ENCODE measurements at regions of chr18 and their contacts with region 1.

Region 1: DNA sequence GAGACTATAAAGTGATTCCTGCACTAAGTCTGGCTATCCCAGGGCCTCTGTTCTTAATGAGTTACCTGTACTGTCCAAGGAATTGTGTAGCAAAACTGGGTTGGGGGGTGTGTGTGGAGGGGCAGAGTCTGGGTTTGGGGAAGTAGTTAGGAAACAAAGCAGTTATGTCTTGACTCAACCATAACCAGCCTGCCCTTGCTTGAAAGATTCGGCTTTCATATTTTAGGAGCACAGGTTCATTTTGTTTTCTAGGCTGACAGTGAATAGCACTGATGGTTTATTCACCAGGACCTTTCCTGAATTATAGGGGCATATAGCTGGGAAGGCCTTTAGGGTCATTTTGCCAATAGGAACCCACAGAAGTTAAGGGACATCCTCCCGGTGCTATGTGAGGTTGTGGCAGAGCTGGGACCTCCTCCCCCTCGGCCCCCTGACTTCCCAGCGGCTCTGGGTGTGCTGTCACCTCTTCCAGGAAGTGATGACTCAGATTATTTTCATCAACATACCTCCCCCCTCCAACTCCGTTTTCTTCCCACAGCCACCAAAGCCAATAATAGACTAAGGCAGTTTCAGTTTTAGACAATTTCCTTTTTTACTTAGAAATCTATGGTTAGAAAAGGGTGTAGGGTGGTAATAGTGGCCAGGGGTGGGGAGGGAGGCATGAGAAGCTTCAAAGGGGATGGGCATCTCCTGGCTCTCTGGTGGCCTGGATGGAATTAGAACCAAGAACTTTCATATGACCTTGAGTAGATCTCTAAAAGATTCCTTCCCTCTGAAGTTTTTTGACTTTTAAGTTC is 44.8 kb downstream of the SETBP1 start:
- DNase-seq: peak; percentile 78
- H3K4me3 Mint-ChIP-seq: no peak overlapping the region
- H3K27ac Mint-ChIP-seq: peak overlapping the region; percentile 59
- H3K4me1 Mint-ChIP-seq: peaks cover 54% of the 10 kb centered on the region
- H3K27me3 Mint-ChIP-seq: no peaks in the 10 kb centered on the region

Region 2: DNA sequence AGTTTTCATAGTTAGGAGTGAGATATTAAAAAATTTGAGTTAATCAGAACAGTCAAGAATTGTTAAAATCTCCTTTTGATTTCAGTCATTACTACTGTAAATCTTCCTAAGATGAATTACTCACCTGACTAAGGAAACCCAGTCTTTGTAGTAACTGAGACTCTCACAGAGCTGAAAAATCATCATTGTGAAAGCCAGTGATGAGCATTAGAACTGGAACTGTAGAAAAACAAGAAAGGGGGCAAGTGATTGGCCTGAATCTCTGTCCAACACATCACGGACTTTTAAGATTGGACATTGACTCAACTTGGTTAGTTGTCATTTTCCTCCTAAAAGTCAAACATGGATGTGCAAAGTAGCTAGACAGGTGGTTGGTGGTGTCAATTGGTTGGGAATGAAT is 22.9 kb before region 1 on chr18:
- CTCF ChIA-PET with region 1: no interaction called
- intact Hi-C with region 1: loop called (anchors 2 kb)
- DNase-seq: no peak
- H3K4me3 Mint-ChIP-seq: no peak overlapping the region
- H3K27ac Mint-ChIP-seq: no peak overlapping the region
- H3K4me1 Mint-ChIP-seq: peaks cover 16% of the 10 kb centered on the region
- H3K27me3 Mint-ChIP-seq: peaks cover 27% of the 10 kb centered on the region

Region 3: DNA sequence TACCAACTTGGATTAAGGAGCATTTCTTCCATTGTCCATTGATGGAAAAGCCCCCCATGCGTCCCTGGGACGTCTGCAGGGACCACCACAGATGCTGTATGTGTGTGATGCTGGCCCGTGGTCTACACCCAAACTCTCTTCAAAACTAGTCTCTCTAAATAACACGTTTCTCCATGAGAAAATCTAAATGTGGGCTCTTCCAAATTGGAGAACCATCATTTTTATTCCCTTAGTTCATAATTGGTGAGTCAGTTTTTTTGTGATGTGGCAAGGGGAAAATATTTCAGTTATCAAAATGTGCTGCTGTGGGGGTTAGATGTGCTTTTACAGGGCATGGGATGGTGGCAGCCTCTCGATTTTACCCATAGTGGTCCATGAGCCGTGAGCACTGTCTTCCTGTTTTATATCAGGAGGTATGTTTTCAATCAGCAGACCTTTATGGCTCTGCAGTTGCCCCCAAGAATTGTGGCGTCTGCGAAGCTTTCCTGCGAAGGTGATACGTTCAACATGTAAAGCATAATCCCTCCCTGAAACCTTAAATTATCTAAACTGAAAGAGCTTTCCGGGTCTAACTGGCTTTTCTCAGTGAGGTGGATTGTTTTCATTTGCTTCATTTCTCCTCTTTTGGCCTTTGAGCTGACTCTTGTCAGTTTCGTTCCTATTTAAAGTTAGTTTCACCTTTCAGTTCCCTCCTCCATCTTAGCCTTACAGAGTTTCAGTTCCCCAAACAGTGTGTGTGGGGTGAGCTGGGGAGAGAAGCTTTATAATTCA is 33.5 kb after region 1 on chr18:
- CTCF ChIA-PET with region 1: interaction called, 7 read pairs
- intact Hi-C with region 1: loop called (anchors 1 kb)
- DNase-seq: peak; percentile 76
- H3K4me3 Mint-ChIP-seq: no peak overlapping the region
- H3K27ac Mint-ChIP-seq: peak overlapping the region; percentile 80
- H3K4me1 Mint-ChIP-seq: peaks cover 27% of the 10 kb centered on the region
- H3K27me3 Mint-ChIP-seq: peaks cover 6% of the 10 kb centered on the region

Region 4: DNA sequence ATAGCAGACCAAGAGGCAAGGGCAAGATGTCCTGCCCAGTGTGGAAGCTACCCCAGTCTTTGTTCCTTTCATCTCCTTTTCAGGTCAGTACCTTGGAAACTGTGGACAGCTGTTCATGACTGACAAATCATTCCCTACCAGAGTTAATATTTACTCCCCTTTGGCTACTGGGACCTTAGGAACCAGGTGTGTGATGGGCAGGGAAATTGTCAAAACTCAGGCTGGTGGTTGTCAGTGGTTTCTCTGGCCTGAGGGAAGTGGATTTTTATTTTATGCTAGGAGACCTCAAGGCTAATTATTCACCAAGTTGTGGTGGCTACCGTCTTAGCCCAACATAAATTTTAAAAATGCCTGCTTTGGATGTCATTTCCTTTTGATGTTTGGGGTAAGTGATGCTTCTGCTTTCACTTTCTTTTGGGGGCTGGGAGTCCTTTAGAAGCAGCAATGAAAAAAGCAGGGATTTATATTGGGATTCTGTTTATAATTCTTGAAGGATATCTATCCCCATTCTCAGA is 74.5 kb after region 1 on chr18:
- CTCF ChIA-PET with region 1: no interaction called
- intact Hi-C with region 1: loop called (anchors 1 kb)
- DNase-seq: no peak
- H3K4me3 Mint-ChIP-seq: no peak overlapping the region
- H3K27ac Mint-ChIP-seq: no peak overlapping the region
- H3K4me1 Mint-ChIP-seq: peaks cover 49% of the 10 kb centered on the region
- H3K27me3 Mint-ChIP-seq: peaks cover 9% of the 10 kb centered on the region

Region 5: GRCh38 chr18:44838971-44839666 is 113.6 kb after region 1 on chr18:
- CTCF ChIA-PET with region 1: no interaction called
- intact Hi-C with region 1: loop called (anchors 2 kb)
- DNase-seq: peak; percentile 85
- H3K4me3 Mint-ChIP-seq: no peak overlapping the region
- H3K27ac Mint-ChIP-seq: no peak overlapping the region
- H3K4me1 Mint-ChIP-seq: peaks cover 12% of the 10 kb centered on the region
- H3K27me3 Mint-ChIP-seq: peaks cover 22% of the 10 kb centered on the region

Region 6: GRCh38 chr18:45197526-45197970 is 472.1 kb after region 1 on chr18:
- CTCF ChIA-PET with region 1: no interaction called
- intact Hi-C with region 1: loop called (anchors 1 kb)
- DNase-seq: peak; percentile 18
- H3K4me3 Mint-ChIP-seq: no peak overlapping the region
- H3K27ac Mint-ChIP-seq: no peak overlapping the region
- H3K4me1 Mint-ChIP-seq: no peaks in the 10 kb centered on the region
- H3K27me3 Mint-ChIP-seq: peaks cover 6% of the 10 kb centered on the region

Region 7: DNA sequence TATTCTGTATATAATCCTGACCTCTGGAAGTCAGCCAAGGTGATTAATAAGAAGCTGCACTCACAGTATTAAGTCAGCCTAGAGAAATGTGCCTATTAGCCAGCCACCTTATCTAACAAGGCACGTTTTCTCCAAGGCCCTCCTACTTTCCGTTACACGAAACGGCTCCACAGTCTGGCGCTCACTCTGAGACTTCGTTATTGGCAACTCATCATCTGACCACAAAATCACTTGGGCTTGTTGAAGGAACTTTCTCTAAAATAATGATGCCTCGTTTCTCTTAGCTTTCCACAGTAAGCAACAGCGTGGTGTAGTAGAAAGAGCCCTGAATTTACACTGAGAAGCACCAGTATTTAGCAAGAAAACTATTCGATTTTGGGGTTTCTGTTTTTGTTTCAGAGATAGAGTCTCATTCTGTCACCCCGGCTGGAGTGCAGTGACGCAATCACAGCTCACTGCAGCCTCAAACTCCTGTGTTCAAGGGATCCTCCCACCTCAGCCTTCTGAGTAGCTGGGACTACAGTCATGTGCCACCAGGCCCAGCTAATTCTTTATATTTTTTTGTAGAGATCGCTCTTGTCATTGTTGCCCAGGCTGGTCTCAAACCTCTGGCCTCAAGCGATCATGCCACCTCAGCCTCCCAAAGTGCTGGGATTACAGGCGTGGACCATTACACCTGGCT is 944.9 kb after region 1 on chr18:
- CTCF ChIA-PET with region 1: no interaction called
- intact Hi-C with region 1: loop called (anchors 5 kb)
- DNase-seq: peak; percentile 76
- H3K4me3 Mint-ChIP-seq: peak overlapping the region; percentile 56
- H3K27ac Mint-ChIP-seq: peak overlapping the region; percentile 81
- H3K4me1 Mint-ChIP-seq: peaks cover 61% of the 10 kb centered on the region
- H3K27me3 Mint-ChIP-seq: no peaks in the 10 kb centered on the region

Measured in activated naive CD4-positive, alpha-beta T cell treated with anti-CD3 and anti-CD28 coated beads for 36 hours (primary cell).